Colonic mucosa (tissue), 4 donors: ENCODE measurements at regions of chr3 and their contacts with region 1.

Region 1: DNA sequence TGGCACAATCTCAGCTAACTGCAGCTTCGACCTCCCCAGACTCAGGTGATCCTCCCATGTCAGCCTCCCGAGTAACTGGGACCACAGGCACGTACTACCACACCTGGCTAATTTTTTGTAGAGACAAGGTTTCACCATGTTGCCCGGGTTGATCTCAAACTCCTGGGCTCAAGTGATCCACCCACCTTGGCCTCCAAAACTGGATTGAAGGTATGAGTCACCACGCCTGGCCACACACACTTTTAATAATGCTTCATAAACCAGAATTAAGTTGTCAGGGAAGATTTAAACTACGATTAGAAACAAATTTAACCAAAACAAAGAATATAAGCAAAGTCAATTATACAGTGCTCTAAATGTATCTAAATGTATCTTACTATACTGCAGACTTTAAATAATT is 87.5 kb downstream of the LRRFIP2 start:
- DNase-seq: no peak
- H3K4me3 ChIP-seq: no peak overlapping the region
- H3K27ac ChIP-seq: no peak overlapping the region
- H3K4me1 ChIP-seq: no peaks in the 10 kb centered on the region
- H3K27me3 ChIP-seq: no peaks in the 10 kb centered on the region
- CTCF ChIP-seq: no peak

Region 2: DNA sequence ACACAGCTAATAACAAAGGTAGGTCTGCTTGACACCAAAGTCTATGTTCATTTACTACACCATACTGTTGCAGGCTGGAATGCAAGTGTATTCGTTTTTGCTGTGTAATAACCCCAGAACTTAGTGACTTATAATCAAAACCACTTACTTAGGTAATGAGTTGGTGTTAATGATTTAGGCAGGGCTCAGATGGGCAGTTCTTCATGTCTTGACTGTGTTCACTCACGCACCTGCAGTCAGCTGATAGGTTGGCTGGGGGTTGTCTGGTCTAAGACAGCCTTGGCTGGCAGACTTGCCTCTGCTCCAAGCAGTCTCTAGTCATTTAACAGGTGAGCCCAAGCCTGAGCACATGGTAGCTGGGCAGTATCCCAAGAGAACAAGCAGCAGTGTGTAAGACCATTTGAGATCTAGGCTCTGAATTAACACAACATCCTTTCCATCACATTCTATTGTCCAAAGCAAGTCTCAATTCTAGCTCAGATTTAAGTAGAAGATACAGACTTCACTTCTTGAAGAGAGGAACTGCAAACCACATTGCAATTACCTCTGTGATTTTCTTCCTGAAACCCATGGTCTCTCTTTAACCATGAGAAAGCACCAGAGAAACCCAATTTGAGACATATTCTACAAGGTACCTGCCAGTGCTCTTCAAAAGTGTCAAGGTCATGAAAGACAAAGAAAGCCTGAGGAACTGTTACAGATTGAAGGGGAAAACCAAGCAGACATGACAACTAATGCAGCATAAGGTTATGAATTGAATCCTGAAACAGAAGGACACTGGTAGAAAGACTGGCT is 309.3 kb before region 1 on chr3:
- intact Hi-C with region 1: no loop called
- DNase-seq: no peak
- H3K4me3 ChIP-seq: no peak overlapping the region
- H3K27ac ChIP-seq: no peak overlapping the region
- H3K4me1 ChIP-seq: no peaks in the 10 kb centered on the region
- H3K27me3 ChIP-seq: no peaks in the 10 kb centered on the region
- CTCF ChIP-seq: no peak

Region 3: GRCh38 chr3:37154668-37155314 is 67.9 kb after region 1 on chr3:
- intact Hi-C with region 1: loop called (anchors 10 kb)
- DNase-seq: no peak
- H3K4me3 ChIP-seq: no peak overlapping the region
- H3K27ac ChIP-seq: no peak overlapping the region
- H3K4me1 ChIP-seq: no peaks in the 10 kb centered on the region
- H3K27me3 ChIP-seq: no peaks in the 10 kb centered on the region
- CTCF ChIP-seq: no peak